ENCODE measurements at regions of chr19 and their contacts with region 1.

Region 1: GRCh38 chr19:36418287-36419001 is at the start of gene ZFP82:
- DNase-seq: peak; percentile 70 to 80
- H3K4me3 ChIP-seq: peak within 1 kb of the TSS; percentile 61
- H3K4me3 Mint-ChIP-seq: peak within 1 kb of the TSS; percentile 97
- H3K27ac Mint-ChIP-seq: peak within 1 kb of the TSS; percentile 92
- H3K4me1 ChIP-seq: no peaks in the 10 kb centered on the region
- H3K4me1 Mint-ChIP-seq: no peaks in the 10 kb centered on the region
- H3K27me3 ChIP-seq: no peaks in the 10 kb centered on the region
- H3K27me3 Mint-ChIP-seq: no peaks in the 10 kb centered on the region
- CTCF ChIP-seq: no peak
- total RNA-seq, gene ZFP82: 3.6 and 3.7 TPM in 2 replicates

Region 2: DNA sequence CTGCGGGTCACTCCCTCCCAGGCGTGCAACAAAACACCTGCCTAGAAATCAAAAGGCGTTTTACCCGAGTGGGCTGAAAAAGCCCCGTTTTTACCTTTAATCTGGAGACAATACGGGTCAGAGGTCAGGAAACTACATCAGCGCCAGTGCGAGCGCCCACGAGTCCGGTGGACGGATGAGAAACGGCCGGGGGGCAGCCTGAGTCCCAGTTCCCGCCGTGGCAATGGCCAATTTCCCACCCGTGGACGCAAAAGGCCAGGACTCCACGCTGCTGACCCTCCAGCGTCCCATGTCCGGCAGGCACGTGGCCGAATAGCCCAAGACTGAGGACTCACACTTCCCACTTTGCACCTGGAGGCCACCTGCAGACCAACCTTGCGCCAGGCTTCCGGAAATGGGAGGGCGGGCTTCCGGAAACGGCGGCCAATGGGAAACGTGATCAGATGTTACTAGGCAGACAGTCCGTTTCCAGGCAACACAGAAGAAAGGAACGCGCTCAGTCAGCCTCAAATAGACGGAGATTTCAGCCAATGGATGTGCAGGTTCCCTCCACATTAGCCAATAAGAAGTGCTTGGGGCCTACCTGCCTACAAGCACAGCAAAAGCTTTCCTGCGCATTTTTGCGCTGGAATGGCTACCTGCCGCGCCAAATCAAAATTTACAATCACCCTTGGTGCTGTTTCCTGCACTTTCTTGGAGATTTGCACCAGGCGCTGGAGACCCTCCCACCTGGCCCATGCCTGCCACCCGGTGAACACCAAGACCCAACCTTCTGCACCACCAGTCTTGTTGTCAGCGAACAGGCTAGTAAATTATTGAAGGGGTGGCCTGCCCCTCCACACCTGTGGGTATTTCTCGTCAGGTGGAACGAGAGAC is 86.9 kb before region 1 on chr19:
- CTCF ChIA-PET with region 1: no interaction called
- POLR2A ChIA-PET with region 1: no interaction called
- intact Hi-C with region 1: no loop called
- DNase-seq: peak in 1 of 2 experiments; percentile 43
- H3K4me3 ChIP-seq: no peak overlapping the region
- H3K4me3 Mint-ChIP-seq: peak overlapping the region; percentile 44
- H3K27ac Mint-ChIP-seq: no peak overlapping the region
- H3K4me1 ChIP-seq: no peaks in the 10 kb centered on the region
- H3K4me1 Mint-ChIP-seq: no peaks in the 10 kb centered on the region
- H3K27me3 ChIP-seq: no peaks in the 10 kb centered on the region
- H3K27me3 Mint-ChIP-seq: no peaks in the 10 kb centered on the region
- CTCF ChIP-seq: no peak

Region 3: DNA sequence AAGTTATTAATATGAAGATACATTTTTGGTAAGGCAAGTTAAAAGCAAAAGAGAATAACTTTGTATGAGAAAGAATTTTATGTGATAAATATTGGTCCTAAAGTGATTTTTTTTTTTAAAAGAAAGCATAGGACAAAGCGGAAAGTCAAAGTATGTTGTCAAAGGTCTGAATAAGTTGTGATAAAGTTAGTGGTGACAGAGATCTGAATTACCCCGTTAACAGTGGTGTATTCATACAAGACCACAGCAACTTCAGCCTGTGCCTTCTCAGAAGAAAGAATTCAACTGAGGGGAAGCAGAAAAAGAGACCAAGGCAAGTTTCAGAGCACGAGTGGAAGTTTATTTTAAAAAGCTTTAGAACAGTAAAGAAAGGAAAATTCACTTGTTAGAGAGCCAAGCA is 89.9 kb after region 1 on chr19:
- CTCF ChIA-PET with region 1: no interaction called
- POLR2A ChIA-PET with region 1: interaction called, 20 read pairs
- intact Hi-C with region 1: no loop called
- DNase-seq: no peak
- H3K4me3 ChIP-seq: no peak overlapping the region
- H3K4me3 Mint-ChIP-seq: no peak overlapping the region
- H3K27ac Mint-ChIP-seq: no peak overlapping the region
- H3K4me1 ChIP-seq: no peaks in the 10 kb centered on the region
- H3K4me1 Mint-ChIP-seq: no peaks in the 10 kb centered on the region
- H3K27me3 ChIP-seq: no peaks in the 10 kb centered on the region
- H3K27me3 Mint-ChIP-seq: no peaks in the 10 kb centered on the region
- CTCF ChIP-seq: no peak